ENCODE measurements at regions of chr1 and their contacts with region 1.

Region 1: DNA sequence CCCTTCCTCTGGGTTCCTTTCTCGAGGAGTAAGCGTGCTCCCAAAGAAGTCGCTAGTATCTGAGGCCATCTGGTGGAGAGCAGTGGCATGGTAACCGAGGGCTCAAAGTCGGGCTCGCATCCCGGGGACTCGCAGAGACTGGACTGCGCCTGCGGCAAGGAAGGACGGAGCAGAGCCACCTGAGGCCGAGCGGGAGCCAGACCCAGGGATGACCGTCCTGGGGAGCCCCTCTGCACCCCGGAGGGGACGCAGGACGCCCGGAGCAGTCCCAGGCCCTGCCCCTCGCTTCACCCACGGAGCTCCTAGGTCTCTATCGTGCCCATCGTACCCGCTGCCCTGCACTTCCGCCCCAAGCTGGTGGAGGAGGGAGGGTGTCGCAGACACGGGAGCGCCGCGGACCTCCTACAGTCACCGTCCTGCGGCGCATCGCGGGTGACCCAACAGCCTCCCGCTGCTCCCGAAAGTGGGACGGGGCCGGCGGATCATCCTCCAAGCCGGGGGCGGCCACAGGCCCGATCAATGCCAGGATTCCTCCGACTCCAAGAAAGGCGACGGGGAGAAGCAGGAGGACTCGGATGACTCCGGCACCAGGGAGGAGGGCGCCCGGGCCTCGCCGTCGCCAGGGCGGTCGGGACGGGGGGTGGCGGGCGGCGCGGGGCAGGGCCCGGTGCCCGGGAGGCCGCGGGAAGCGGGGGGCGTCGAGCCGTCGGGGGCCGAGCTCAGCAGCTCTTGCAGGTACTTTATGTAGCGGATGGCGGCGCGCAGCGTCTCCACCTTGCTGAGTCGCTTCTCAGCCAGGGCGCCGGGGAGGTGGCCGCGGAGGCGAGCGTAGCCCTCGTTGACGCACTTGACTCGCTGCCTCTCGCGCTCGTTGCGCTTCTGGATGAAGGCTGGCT is 2.3 kb upstream of the CACNA1S start:
- DNase-seq: peak; percentile 97
- H3K4me3 ChIP-seq: peak overlapping the region; percentile 65 to 97
- H3K27ac ChIP-seq: peak overlapping the region in 1 of 2 experiments; percentile 39; a peak in 1 of 4 replicates
- H3K4me1 ChIP-seq: peaks cover 0 to 7% of the 10 kb centered on the region in 2 experiments; a peak in 1 of 4 replicates
- H3K27me3 ChIP-seq: peaks cover 5% of the 10 kb centered on the region; the same call in 1 of the 2 replicates
- CTCF ChIP-seq: peak; percentile 85
- EP300 ChIP-seq: no peak
- RAD21 ChIP-seq: peak; percentile 95

Region 2: DNA sequence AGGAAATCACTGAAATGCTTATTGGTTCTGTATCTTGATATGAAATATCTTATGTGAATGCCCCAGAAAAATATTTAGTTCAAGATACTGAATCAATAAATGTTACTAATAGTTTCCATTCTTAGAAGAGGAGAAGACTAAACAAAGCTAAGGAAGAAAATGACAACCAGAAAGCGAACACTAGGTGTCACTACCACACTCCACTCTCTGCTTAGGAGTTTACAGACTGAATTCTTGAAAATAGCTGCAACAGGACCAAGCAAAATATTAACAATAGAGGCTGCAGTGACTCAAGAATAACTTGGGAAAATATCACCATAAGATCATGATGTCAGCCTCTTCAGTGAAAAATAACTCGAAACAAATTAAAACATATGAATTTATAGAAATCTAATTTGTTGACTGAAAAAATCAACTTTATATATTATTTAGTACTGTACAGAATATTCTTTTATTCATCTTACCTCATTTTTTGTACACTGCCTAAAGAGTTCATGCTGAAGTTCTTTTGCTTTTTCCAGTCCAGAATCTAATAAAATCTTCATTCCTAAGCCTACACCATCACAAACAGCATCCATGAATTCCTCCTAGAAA is 555.5 kb before region 1 on chr1:
- CTCF ChIA-PET with region 1: interaction called, 13 read pairs
- POLR2A ChIA-PET with region 1: no interaction called
- DNase-seq: peak; percentile 47
- H3K4me3 ChIP-seq: no peak overlapping the region
- H3K27ac ChIP-seq: no peak overlapping the region
- H3K4me1 ChIP-seq: no peaks in the 10 kb centered on the region
- H3K27me3 ChIP-seq: no peaks in the 10 kb centered on the region
- CTCF ChIP-seq: peak; percentile 86
- EP300 ChIP-seq: no peak
- RAD21 ChIP-seq: peak; percentile 77

Region 3: GRCh38 chr1:200780545-200781369 is 333.7 kb before region 1 on chr1:
- CTCF ChIA-PET with region 1: no interaction called
- POLR2A ChIA-PET with region 1: no interaction called
- DNase-seq: no peak
- H3K4me3 ChIP-seq: no peak overlapping the region
- H3K27ac ChIP-seq: peak overlapping the region; percentile 5 to 6; a peak in 1 of 4 replicates
- H3K4me1 ChIP-seq: peaks cover 6 to 13% of the 10 kb centered on the region in 2 experiments; a peak in 3 of 4 replicates
- H3K27me3 ChIP-seq: no peaks in the 10 kb centered on the region
- CTCF ChIP-seq: no peak
- EP300 ChIP-seq: no peak
- RAD21 ChIP-seq: no peak

Region 4: DNA sequence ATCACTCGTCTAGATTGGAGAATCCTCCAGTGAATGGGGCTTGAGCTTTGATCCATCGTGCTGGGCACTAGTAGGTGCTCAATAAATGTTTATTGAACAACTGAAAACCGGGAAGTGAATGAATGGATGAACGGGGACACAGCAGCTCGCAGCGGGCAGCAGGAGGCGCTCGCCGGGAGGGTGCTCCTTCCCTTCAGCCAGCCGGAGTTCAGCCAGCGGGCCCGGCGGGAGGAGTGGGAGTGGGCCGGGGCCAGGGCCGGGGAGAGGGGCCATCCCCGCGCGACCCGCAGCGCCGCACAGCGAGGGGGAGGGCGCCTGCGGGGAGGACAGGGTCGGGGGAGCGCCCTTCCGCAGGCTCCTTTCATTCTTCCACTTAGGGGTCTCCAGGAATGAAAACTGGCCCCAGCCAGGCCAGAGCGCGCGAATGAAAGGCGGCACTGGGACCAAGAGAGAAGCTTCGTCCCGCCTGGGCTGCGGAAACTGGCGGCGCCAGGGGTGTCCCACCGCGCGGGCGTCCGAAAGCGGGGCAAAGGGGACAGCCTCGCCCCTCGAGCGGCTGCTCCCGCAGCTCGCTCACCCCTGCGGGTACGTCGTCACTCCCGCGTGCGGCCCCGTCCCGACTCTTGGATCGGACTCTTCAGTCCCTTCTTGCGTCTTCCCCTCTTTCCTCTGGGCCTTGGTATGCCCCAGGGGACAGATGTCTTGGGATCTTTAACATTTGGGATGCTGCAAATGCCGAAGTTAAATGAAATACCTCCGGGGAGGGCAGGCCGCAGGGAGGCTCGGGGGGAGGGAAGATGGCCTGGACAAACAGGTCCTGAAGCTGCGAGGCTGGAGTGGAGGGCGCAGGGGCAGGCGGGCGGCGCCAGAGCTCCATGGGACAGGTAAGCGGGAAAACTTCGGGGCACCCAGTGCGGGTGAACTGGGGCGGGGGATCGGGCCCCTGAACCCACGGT is 223.4 kb before region 1 on chr1:
- CTCF ChIA-PET with region 1: interaction called, 10 read pairs
- POLR2A ChIA-PET with region 1: no interaction called
- DNase-seq: peak; percentile 88
- H3K4me3 ChIP-seq: peak overlapping the region; percentile 58 to 70
- H3K27ac ChIP-seq: no peak overlapping the region
- H3K4me1 ChIP-seq: peaks cover 0 to 3% of the 10 kb centered on the region in 2 experiments; a peak in 1 of 4 replicates
- H3K27me3 ChIP-seq: no peaks in the 10 kb centered on the region
- CTCF ChIP-seq: peak; percentile 70
- EP300 ChIP-seq: peak in 1 of 2 experiments; percentile 29; a peak in 1 of 4 replicates
- RAD21 ChIP-seq: peak; percentile 39

Region 5: GRCh38 chr1:201096035-201096434 is 18.4 kb before region 1 on chr1:
- CTCF ChIA-PET with region 1: interaction called, 13 read pairs
- POLR2A ChIA-PET with region 1: no interaction called
- DNase-seq: no peak
- H3K4me3 ChIP-seq: no peak overlapping the region
- H3K27ac ChIP-seq: no peak overlapping the region
- H3K4me1 ChIP-seq: no peaks in the 10 kb centered on the region
- H3K27me3 ChIP-seq: peaks cover 22% of the 10 kb centered on the region
- CTCF ChIP-seq: no peak
- EP300 ChIP-seq: no peak
- RAD21 ChIP-seq: no peak